Keratinocyte (primary cell): ENCODE measurements at regions of chr17 and their contacts with region 1.

Region 1: DNA sequence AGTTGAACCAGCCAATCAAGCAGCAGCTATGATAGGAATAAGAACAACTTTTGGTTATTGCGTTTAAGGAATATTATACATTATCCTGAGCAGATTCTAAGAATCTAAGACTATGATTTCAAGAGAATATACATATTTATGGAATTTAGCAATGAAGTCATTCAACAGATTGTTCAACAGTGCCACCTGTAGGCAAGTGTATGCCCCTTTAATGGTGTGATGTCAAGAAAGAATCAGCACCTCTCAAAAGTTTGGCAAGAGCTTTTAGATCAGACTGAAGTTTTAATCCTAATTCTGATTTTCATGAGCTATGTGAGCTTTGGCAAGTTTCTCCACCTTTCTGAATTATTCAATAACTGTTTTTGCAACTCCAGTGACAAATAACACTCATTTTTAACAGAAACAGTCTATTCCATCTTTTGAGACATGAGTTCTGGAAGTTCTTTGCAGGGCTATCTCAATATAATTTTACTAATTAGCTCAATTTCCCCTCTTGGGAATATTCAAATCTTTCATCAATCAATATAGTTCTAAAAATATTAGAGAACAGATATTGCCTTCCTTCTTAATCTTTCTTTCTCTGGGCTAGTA is 474.3 kb upstream of the TOM1L1 start:
- DNase-seq: no peak
- H3K4me3 ChIP-seq: no peak overlapping the region
- H3K27ac ChIP-seq: no peak overlapping the region
- H3K4me1 ChIP-seq: no peaks in the 10 kb centered on the region
- H3K27me3 ChIP-seq: no peaks in the 10 kb centered on the region
- CTCF ChIP-seq: peak; percentile 28 to 65 (median 65)

Region 2: GRCh38 chr17:54494721-54495715 is 68.6 kb after region 1 on chr17:
- dilution Hi-C with region 1: no loop called
- DNase-seq: no peak
- H3K4me3 ChIP-seq: no peak overlapping the region
- H3K27ac ChIP-seq: no peak overlapping the region
- H3K4me1 ChIP-seq: no peaks in the 10 kb centered on the region
- H3K27me3 ChIP-seq: no peaks in the 10 kb centered on the region
- CTCF ChIP-seq: no peak

Region 3: DNA sequence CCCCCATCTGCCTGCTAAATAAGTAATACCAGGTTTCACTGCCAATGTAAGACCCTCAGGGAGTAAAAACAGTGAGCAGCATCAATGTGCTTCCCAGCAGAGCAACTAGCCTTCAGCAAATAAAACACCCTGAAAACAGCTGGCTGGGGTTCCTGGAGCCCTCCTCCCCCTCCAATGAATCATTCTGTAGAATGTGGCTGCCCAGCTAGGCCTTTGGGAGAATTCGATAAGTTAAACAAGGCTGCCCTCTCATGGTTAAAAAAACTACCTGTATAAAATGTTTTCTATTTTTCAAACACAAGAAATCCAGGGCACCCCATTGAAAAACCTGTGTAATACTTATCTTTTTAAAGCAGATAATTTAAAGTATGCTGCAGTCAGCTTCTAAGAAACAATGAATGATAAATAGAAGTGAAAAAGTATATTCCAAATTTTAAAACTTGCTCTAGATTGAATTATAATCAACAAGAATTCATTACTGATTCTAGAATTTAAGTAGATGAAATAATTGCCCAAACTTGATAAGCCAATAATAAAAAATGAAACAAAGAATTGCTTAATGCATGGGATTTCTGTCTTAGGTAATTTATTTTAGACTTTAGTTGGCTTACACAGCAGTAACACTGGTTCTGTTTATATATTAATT is 464.9 kb after region 1 on chr17:
- dilution Hi-C with region 1: loop called (anchors 25 kb)
- DNase-seq: no peak
- H3K4me3 ChIP-seq: no peak overlapping the region
- H3K27ac ChIP-seq: no peak overlapping the region
- H3K4me1 ChIP-seq: no peaks in the 10 kb centered on the region
- H3K27me3 ChIP-seq: no peaks in the 10 kb centered on the region
- CTCF ChIP-seq: peak; percentile 20 to 44 (median 36)